Breast epithelium (tissue), 4 donors: ENCODE measurements at regions of chr17 and their contacts with region 1.

Region 1: GRCh38 chr17:78589885-78590284 is 12.7 kb upstream of the DNAH17 start:
- DNase-seq: no peak
- H3K4me3 ChIP-seq: no peak overlapping the region
- H3K27ac ChIP-seq: no peak overlapping the region
- H3K4me1 ChIP-seq: no peaks in the 10 kb centered on the region
- H3K27me3 ChIP-seq: no peaks in the 10 kb centered on the region
- CTCF ChIP-seq: no peak
- POLR2A ChIP-seq: no peak

Region 2: GRCh38 chr17:78653382-78653781 is 63.5 kb after region 1 on chr17:
- intact Hi-C with region 1: no loop called
- DNase-seq: no peak
- H3K4me3 ChIP-seq: no peak overlapping the region
- H3K27ac ChIP-seq: no peak overlapping the region
- H3K4me1 ChIP-seq: no peaks in the 10 kb centered on the region
- H3K27me3 ChIP-seq: no peaks in the 10 kb centered on the region
- CTCF ChIP-seq: no peak
- POLR2A ChIP-seq: no peak

Region 3: GRCh38 chr17:78806451-78806850 is 216.6 kb after region 1 on chr17:
- intact Hi-C with region 1: loop called (anchors 5 kb)
- DNase-seq: no peak
- H3K4me3 ChIP-seq: no peak overlapping the region
- H3K27ac ChIP-seq: no peak overlapping the region
- H3K4me1 ChIP-seq: no peaks in the 10 kb centered on the region
- H3K27me3 ChIP-seq: no peaks in the 10 kb centered on the region
- CTCF ChIP-seq: no peak
- POLR2A ChIP-seq: no peak

Region 4: DNA sequence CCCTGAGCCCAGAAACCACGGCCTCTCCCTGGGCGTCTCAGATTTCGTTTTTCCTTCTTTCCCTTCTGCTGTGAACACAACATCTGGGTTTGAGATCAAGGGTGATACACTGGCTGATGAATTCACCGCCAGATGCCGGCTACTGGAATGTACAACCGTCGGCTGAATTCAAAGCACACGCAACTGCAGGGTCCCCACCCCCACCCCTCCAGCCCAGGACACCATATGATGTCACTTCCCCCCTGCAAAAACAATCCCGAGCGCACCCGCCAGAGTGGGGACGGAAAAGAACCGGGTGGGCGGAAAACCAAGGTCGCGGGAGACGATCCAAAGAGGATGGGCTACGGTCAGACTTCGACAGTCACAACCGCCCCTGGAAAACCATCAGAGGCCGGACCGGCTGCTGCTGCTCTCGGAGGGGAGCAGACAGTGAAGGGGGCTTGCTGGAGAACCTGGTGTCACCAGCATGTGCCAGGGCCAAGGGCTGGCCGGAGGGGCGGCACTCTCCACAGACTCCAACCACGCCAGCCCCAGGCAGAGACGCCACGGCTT is 289.8 kb after region 1 on chr17:
- intact Hi-C with region 1: no loop called
- DNase-seq: peak; percentile 57 to 58
- H3K4me3 ChIP-seq: peak overlapping the region; percentile 7 to 52 (median 15)
- H3K27ac ChIP-seq: peak overlapping the region; percentile 85 to 98
- H3K4me1 ChIP-seq: peaks cover 9 to 13% of the 10 kb centered on the region in 2 donors
- H3K27me3 ChIP-seq: no peaks in the 10 kb centered on the region
- CTCF ChIP-seq: no peak
- POLR2A ChIP-seq: no peak